ENCODE measurements at regions of chr9 and their contacts with region 1.

Region 1: DNA sequence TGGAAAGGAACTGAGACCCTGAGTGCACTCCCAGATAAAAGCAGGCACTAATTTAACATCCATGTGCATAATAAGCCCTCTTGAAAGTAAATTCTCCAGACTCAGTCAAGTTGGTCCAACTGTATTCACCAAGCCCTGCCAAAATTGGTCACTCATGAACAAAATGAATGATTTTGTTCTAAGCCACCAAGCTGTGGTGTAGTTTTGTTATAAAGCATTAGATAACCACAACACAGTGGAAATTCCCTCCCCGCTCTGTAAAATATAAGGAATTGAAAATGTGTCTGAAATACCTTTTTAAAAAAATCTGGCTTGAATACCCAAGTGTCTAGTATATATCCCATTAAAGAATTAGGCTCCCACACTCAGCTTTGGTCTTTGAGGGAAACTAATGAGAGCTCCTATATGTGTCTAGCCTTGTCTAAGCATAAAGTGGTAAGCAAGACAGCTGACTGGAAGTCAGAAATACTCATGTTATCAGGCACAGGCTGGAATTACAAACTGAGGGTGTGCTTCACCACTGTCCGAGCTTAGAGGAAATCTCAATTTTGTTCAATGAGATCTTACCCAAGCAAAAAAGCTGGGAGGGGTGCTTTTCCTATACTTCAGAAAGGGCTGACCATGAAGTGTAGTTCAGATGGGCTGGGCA is 33.2 kb downstream of the IDNK start:
- DNase-seq: no peak
- ATAC-seq: peak in 3 of 8 donors; percentile 68 to 79 (median 71)
- H3K4me3 ChIP-seq: no peak overlapping the region
- H3K27ac ChIP-seq: peak overlapping the region in 1 of 10 donors; percentile 3
- H3K4me1 ChIP-seq: peaks cover 0 to 12% (median 0%) of the 10 kb centered on the region in 9 donors
- H3K27me3 ChIP-seq: no peaks in the 10 kb centered on the region
- CTCF ChIP-seq: no peak

Region 2: GRCh38 chr9:83707768-83708514 is 51.8 kb after region 1 on chr9 and contains the start of gene UBQLN1:
- intact Hi-C with region 1: loop called in 1 of 10 experiments (anchors 10 kb)
- DNase-seq: peak; percentile 93 to 96
- ATAC-seq: peak; percentile 96 to 98 (median 97)
- H3K4me3 ChIP-seq: peak within 1 kb of the TSS; percentile 73 to 99 (median 95)
- H3K27ac ChIP-seq: peak within 1 kb of the TSS; percentile 94 to 99 (median 96)
- H3K4me1 ChIP-seq: peaks cover 0 to 46% (median 34%) of the 10 kb centered on the region in 9 donors
- H3K27me3 ChIP-seq: no peaks in the 10 kb centered on the region
- CTCF ChIP-seq: no peak
- total RNA-seq, gene UBQLN1: 86.1 to 123 (median 99.2) TPM

Measured in heart right ventricle (tissue), 16 donors.